ENCODE measurements at regions of chr11 and their contacts with region 1.

Region 1: GRCh38 chr11:7278314-7278917 is 26.7 kb downstream of the SYT9 start:
- DNase-seq: peak; percentile 42 to 50
- ATAC-seq: peak; percentile 81 to 90; a peak in 5 of 6 replicates
- H3K4me3 ChIP-seq: no peak overlapping the region
- H3K27ac ChIP-seq: no peak overlapping the region
- H3K4me1 ChIP-seq: no peaks in the 10 kb centered on the region
- CTCF ChIP-seq: peak; percentile 53
- EP300 ChIP-seq: no peak
- POLR2A ChIP-seq: no peak
- RAD21 ChIP-seq: peak; percentile 57 to 62; a peak in 4 of 5 replicates

Region 2: DNA sequence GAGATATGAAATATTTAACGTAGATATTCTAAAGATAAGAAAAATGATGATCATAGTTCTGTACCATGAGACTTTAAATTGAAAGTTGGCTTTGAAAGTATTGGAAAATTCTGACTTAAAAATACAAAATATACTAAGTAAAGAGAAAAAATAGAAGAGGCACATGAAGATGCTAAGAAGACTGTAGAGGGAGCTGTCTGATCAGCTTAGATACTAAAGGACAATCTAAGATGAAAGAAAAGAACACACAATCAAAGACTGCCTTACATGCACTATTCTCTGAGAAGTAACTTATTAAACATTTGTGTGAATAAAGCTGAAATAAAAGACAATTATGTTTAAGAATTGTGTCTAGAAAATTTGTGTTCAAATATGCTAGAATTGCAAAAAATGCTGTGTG is 134.5 kb before region 1 on chr11:
- CTCF ChIA-PET with region 1: interaction called, 21 read pairs
- POLR2A ChIA-PET with region 1: no interaction called
- DNase-seq: peak in 1 of 2 experiments; percentile 31
- ATAC-seq: no peak
- H3K4me3 ChIP-seq: no peak overlapping the region
- H3K27ac ChIP-seq: no peak overlapping the region
- H3K4me1 ChIP-seq: no peaks in the 10 kb centered on the region
- CTCF ChIP-seq: peak; percentile 38
- EP300 ChIP-seq: no peak
- POLR2A ChIP-seq: no peak
- RAD21 ChIP-seq: peak; percentile 52 to 59; a peak in 4 of 5 replicates

Region 3: DNA sequence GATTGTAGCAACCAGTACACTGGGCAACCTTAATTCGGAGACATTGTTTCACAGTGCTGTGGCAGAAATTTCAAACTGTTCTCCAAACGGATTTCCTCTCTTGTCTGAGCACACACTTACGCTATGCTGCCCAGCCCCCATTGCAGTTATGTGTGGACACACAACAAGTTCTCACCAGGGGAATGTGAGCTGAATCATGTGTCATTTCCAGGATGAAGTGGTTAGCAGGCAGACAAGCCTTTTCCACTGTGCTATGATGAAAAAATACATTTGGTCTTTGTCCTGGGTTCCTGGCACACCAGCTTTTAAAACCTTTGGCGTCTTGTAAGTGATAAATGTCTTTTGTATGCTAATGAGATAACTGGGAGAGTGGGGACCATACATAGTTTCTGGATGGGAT is 73.6 kb before region 1 on chr11:
- CTCF ChIA-PET with region 1: no interaction called
- POLR2A ChIA-PET with region 1: no interaction called
- DNase-seq: no peak
- ATAC-seq: no peak
- H3K4me3 ChIP-seq: no peak overlapping the region
- H3K27ac ChIP-seq: no peak overlapping the region
- H3K4me1 ChIP-seq: no peaks in the 10 kb centered on the region
- CTCF ChIP-seq: no peak
- EP300 ChIP-seq: no peak
- POLR2A ChIP-seq: no peak
- RAD21 ChIP-seq: no peak

Measured in A549 (cell line).